Dendritic cell treated with granulocyte-macrophage colony-stimulating factor and Interleukin-4, amounts not matched to agents 40 ng/mL and 50 ng/mL, for 4 days (primary cell): ENCODE measurements at regions of chr2 and their contacts with region 1.

Region 1: DNA sequence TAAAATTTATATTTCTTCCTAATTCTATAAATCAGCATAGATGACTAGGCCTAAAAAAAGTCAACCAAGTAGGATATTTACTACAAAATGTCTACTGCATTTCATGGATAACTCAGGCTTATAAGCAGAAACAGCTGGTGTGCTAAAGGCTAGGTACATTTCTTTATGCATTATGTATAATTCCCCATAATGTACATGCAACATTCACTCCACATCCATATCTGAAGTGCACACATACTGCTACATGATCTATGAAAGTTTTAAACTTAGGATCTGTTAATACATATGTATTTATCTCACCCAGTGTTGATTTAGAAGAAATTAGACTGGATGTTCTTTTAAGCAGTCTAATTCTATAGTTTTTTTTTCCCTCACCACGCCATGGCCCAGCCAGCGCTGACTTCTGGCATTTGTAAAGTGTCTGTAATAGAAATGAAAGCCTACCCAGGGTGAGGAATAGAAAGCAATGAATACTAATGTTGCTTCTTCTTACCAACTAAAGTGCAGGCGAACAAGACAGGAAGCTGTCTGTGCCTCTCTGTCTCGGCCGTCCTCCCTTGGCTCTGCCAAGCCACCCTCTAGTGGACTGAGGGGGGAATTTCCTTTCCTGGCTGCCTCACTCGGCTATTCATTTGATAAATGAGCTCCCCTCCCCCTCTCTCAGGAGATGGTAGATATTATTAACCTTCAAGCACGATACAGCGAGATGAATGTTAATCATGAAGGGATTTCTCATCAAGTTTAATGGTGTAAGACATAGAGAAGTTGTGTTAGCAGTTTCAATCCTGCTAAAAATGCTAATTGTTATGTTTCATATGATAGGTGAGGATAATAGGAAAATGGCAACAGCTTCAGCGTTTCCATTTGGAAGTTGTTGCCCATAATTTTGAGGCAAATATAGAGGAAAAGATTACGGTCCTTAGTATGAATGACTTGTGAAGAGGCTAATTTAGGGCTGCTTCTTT is 384.5 kb downstream of the MTX2 start:
- H3K4me3 Mint-ChIP-seq: no peak overlapping the region
- H3K27ac Mint-ChIP-seq: no peak overlapping the region
- H3K4me1 Mint-ChIP-seq: no peaks in the 10 kb centered on the region
- H3K27me3 Mint-ChIP-seq: peaks cover 42% of the 10 kb centered on the region

Region 2: GRCh38 chr2:176692533-176692932 is 38.8 kb after region 1 on chr2:
- intact Hi-C with region 1: no loop called
- H3K4me3 Mint-ChIP-seq: no peak overlapping the region
- H3K27ac Mint-ChIP-seq: no peak overlapping the region
- H3K4me1 Mint-ChIP-seq: no peaks in the 10 kb centered on the region
- H3K27me3 Mint-ChIP-seq: peaks cover 2% of the 10 kb centered on the region

Region 3: GRCh38 chr2:176814306-176815052 is 160.7 kb after region 1 on chr2:
- intact Hi-C with region 1: loop called (anchors 10 kb)
- H3K4me3 Mint-ChIP-seq: no peak overlapping the region
- H3K27ac Mint-ChIP-seq: no peak overlapping the region
- H3K4me1 Mint-ChIP-seq: no peaks in the 10 kb centered on the region
- H3K27me3 Mint-ChIP-seq: no peaks in the 10 kb centered on the region